Tibial artery (tissue), 4 donors: ENCODE measurements at regions of chr1 and their contacts with region 1.

Region 1: DNA sequence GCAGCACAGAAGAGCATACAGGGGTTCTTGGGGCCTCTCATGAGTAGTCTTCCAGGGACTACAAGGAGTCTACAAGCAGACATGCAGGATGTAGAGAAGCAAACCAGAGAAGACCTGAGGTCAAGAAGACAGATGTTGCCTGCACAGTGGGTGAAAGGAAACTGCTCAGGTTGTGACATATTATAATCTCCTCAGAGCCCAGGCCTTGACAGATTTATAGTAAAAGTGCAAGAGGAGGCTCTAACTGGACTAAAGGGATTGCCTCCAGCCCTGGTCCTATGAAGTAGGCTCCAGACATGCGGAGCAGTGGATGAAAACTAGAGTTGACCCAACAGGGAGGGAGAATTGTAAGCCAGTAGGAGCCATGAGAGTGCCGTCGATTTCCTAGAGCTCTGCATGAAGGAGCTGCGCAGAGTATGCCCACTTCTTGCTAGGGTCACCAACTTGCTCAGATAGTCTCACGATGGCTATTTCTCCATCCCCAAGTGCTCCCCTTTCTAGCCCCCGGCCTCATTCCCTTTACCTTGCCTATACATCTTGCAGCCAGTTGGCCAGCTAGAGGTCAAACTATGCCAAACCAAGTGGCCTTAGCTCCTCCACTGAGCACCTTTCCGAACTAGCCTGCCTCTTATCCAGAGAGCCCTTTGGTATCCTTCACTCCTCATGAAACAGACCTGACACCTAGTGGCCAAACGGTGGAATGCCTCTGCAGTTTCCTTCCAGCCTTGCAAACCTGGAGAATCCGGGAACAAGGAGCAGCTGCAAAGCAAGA is 36.2 kb upstream of the IPO9 start:
- DNase-seq: peak; percentile 83 to 89
- H3K4me3 ChIP-seq: no peak overlapping the region
- H3K27ac ChIP-seq: peak overlapping the region; percentile 66
- H3K4me1 ChIP-seq: peaks cover 0 to 51% (median 39%) of the 10 kb centered on the region in 4 donors
- H3K27me3 ChIP-seq: no peaks in the 10 kb centered on the region
- CTCF ChIP-seq: peak; percentile 95 to 97

Region 2: GRCh38 chr1:201559679-201560162 is 233.0 kb before region 1 on chr1:
- intact Hi-C with region 1: loop called (anchors 2 kb)
- DNase-seq: peak; percentile 73 to 85
- H3K4me3 ChIP-seq: no peak overlapping the region
- H3K27ac ChIP-seq: no peak overlapping the region
- H3K4me1 ChIP-seq: peaks cover 0 to 20% (median 7%) of the 10 kb centered on the region in 4 donors
- H3K27me3 ChIP-seq: no peaks in the 10 kb centered on the region
- CTCF ChIP-seq: peak; percentile 89 to 97

Region 3: GRCh38 chr1:201709564-201710295 is 83.0 kb before region 1 on chr1:
- intact Hi-C with region 1: loop called (anchors 2 kb)
- DNase-seq: peak; percentile 78 to 86
- H3K4me3 ChIP-seq: no peak overlapping the region
- H3K27ac ChIP-seq: peak overlapping the region; percentile 86 to 87
- H3K4me1 ChIP-seq: peaks cover 0 to 58% (median 50%) of the 10 kb centered on the region in 4 donors
- H3K27me3 ChIP-seq: no peaks in the 10 kb centered on the region
- CTCF ChIP-seq: peak; percentile 94 to 97